ENCODE measurements at regions of chr1 and their contacts with region 1.

Region 1: GRCh38 chr1:53754484-53755312 is 15.7 kb upstream of the GLIS1 start:
- DNase-seq: no peak
- H3K4me3 ChIP-seq: no peak overlapping the region
- H3K27ac ChIP-seq: no peak overlapping the region
- H3K4me1 ChIP-seq: no peaks in the 10 kb centered on the region
- H3K27me3 ChIP-seq: no peaks in the 10 kb centered on the region
- CTCF ChIP-seq: peak in 5 of 6 experiments; percentile 35 to 68 (median 54)
- POLR2A ChIP-seq: no peak

Region 2: DNA sequence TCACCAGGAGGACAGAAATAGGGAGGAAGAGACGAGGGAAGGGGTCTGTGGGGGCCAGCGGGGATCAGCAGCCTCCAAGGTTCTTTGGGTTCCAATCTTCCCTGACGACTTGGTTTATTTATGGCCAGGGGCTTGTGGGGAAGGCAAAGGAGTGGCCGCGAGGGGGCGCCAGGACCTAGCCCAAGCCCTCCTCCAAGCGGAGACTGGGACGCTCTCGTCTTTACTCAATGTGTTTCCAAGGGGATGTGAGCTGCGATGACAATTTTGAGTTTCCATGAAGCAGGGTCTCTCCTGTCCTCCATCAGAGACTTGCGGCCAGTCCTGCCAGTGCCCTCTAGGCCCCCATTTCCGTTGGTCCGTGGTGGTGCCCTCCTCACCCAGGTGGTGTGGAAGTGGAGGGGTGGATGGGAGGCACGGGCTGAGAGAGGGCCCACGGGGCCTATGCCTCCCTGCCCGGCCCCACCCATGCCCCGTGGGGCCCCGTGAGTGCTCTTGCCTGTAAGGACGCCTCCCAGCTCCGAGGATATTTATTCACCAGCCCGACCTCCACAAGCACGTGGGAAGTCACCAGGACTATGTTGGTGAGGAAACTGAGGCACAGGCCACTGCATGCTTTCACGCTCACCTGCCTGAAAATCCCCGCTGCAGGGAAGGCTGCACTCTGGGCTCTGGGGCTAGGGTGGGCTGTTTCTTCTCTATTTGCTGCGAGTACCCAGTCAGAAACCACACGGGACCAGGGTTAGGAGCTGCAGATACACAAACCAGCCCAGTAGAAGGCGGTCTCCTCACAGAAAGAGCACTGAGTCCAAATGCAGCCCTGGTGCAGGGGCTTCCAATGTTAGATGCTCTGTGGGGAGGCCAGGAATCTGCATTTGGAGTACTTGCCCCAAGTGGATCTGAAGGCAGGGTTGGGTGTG is 269.0 kb before region 1 on chr1:
- intact Hi-C with region 1: loop called (anchors 10 kb)
- DNase-seq: no peak
- H3K4me3 ChIP-seq: no peak overlapping the region
- H3K27ac ChIP-seq: no peak overlapping the region
- H3K4me1 ChIP-seq: peaks cover 0 to 6% (median 5%) of the 10 kb centered on the region in 3 donors
- H3K27me3 ChIP-seq: peaks cover 0 to 82% (median 0%) of the 10 kb centered on the region in 4 donors
- CTCF ChIP-seq: peak; percentile 56 to 83 (median 79)
- POLR2A ChIP-seq: no peak

Measured in esophagus squamous epithelium (tissue), 5 donors.